GM12878 (cell line): ENCODE measurements at regions of chr2 and their contacts with region 1.

Region 1: DNA sequence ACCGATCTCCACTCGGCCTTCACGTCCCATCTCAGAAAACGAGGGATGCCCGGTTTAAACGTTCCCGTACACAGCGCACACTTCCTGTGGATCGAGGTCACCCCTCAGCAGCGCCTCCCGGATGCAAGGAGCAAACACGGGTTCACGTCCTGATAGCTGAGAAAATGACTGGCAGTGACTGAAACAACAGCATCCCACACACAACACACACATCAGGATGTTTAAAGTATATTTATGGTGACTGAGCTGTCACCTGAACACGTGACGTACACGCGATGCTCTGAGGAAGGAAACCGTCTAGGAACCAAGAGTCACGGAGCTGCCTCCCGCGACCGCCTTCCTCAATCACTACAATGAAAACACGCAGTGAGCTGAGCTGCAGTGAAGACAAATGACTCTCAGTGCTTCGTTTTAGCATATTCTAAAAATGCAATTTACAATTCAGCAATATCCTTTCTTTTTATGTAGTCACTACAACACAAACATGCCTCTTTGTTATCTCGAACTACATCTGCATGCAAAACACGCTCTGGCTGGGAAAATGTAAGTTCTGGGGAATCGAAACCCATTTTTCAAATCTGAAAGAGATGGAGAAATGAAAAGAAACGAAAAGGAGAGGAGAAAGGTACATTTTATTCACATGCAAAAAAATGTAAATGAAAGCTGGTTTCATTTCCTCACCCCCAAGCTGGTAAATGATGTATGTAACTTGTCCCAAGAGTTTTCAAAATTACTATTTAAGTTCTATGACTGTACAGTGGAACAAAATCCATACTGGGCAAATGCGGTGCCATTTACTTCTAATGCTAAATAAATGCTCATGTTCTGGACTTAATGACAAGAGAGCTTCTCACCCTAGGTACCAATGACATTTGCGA is 19.8 kb downstream of the HDAC4 start:
- DNase-seq: peak; percentile 35
- ATAC-seq: peak; percentile 65
- H3K4me3 ChIP-seq: peak overlapping the region; percentile 49; the same call in 1 of the 2 replicates
- H3K27ac ChIP-seq: 0 out of 2 replicates have a peak overlapping the region, but pooled peaks have one; percentile 13
- H3K4me1 ChIP-seq: peaks cover 12% of the 10 kb centered on the region
- H3K27me3 ChIP-seq: no peaks in the 10 kb centered on the region
- CTCF ChIP-seq: no peak
- EP300 ChIP-seq: peak in 1 of 2 experiments; percentile 24; a peak in 1 of 4 replicates
- POLR2A ChIP-seq: no peak
- RAD21 ChIP-seq: no peak

Region 2: DNA sequence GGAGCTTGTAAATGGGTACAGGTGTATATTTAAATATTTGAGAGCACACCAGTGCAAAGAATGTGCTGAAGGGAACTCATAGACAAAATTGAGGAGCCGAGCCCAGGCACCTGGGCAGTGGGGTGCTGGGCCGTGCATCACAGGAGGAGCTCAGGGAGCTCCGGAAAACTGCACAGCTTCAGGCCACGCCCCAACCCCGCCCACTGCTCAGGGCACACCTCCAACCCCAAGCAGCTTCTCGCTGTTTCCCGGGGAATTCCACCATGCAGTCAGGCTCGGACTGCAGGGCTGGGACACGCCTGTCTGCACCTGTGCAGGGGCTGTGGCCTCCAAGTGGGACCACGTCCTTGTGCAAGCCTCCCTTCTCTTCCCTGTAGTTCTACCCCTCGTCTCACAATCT is 223.3 kb before region 1 on chr2:
- CTCF ChIA-PET with region 1: no interaction called
- POLR2A ChIA-PET with region 1: no interaction called
- RAD21 ChIA-PET with region 1: no interaction called
- SMC1A ChIA-PET with region 1: no interaction called
- in situ Hi-C with region 1: no loop called
- intact Hi-C with region 1: no loop called
- DNase-seq: no peak
- ATAC-seq: no peak
- H3K4me3 ChIP-seq: no peak overlapping the region
- H3K27ac ChIP-seq: no peak overlapping the region
- H3K4me1 ChIP-seq: no peaks in the 10 kb centered on the region
- H3K27me3 ChIP-seq: no peaks in the 10 kb centered on the region
- CTCF ChIP-seq: no peak
- EP300 ChIP-seq: no peak
- POLR2A ChIP-seq: no peak
- RAD21 ChIP-seq: no peak

Region 3: GRCh38 chr2:239267288-239267951 is 113.7 kb before region 1 on chr2:
- CTCF ChIA-PET with region 1: interaction called, 6 read pairs
- POLR2A ChIA-PET with region 1: no interaction called
- RAD21 ChIA-PET with region 1: interaction called, 7 read pairs
- SMC1A ChIA-PET with region 1: interaction called, 12 read pairs
- in situ Hi-C with region 1: no loop called
- intact Hi-C with region 1: loop called (anchors 5 kb)
- DNase-seq: peak; percentile 65
- ATAC-seq: peak; percentile 95
- H3K4me3 ChIP-seq: peak overlapping the region; percentile 45; the same call in 1 of the 2 replicates
- H3K27ac ChIP-seq: no peak overlapping the region
- H3K4me1 ChIP-seq: peaks cover 44% of the 10 kb centered on the region
- H3K27me3 ChIP-seq: no peaks in the 10 kb centered on the region
- CTCF ChIP-seq: peak; percentile 42 to 71 (median 57); a peak in 5 of 6 replicates
- EP300 ChIP-seq: no peak
- POLR2A ChIP-seq: peak; percentile 59; the same call in 1 of the 2 replicates
- RAD21 ChIP-seq: peak; percentile 81

Region 4: DNA sequence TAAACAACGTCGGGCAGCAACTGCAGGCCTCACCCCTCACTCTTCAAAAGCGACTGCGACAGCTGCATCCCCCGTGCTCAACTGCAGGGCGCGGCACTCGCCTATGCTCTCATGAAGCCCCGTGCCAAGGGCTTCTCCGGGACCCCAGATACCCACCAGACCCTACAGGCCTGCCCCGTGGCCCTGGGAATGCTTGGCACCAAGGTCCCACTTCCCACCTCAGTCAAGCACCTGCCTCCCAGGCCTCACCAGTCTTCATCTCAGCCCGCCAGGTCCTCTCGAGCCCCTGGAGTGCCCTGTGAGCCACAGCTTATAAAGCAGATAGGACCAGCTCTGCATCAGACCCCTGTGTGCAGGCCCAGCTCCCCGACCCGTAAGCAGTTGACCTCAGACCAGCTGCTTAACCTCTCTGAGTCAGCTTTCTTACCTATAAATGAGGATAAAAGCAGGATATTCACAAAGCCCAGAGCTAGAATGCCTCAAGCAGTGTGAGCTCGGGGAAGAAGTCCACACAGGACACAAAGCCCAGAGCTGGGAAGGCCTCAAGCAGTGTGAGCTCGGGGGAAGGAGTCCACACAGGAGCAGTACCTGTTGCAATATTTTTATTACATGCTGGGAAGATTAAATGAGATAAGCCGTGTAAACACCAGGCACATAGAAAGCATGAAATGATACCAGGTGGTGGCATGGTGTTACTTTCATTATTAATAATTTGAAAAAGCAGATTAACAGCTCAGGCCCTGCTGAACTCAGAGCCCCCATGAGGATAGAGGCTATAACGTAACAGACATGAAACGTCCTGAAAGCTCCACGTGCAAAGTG is 77.1 kb before region 1 on chr2:
- CTCF ChIA-PET with region 1: interaction called, 4 read pairs
- POLR2A ChIA-PET with region 1: interaction called, 3 read pairs
- RAD21 ChIA-PET with region 1: interaction called, 13 read pairs
- SMC1A ChIA-PET with region 1: interaction called, 14 read pairs
- in situ Hi-C with region 1: no loop called
- intact Hi-C with region 1: no loop called
- DNase-seq: no peak
- ATAC-seq: peak; percentile 89
- H3K4me3 ChIP-seq: no peak overlapping the region
- H3K27ac ChIP-seq: no peak overlapping the region
- H3K4me1 ChIP-seq: peaks cover 22% of the 10 kb centered on the region
- H3K27me3 ChIP-seq: no peaks in the 10 kb centered on the region
- CTCF ChIP-seq: no peak
- EP300 ChIP-seq: peak; percentile 66 to 87; a peak in 2 of 4 replicates
- POLR2A ChIP-seq: no peak
- RAD21 ChIP-seq: no peak

Region 5: GRCh38 chr2:239369631-239370161 is 11.4 kb before region 1 on chr2:
- CTCF ChIA-PET with region 1: interaction called, 25 read pairs
- POLR2A ChIA-PET with region 1: interaction called, 13 read pairs
- RAD21 ChIA-PET with region 1: interaction called, 23 read pairs
- SMC1A ChIA-PET with region 1: interaction called, 27 read pairs
- in situ Hi-C with region 1: no loop called
- intact Hi-C with region 1: loop called (anchors 1 kb)
- DNase-seq: peak; percentile 83
- ATAC-seq: peak; percentile 96
- H3K4me3 ChIP-seq: peak overlapping the region; percentile 34; the same call in 1 of the 2 replicates
- H3K27ac ChIP-seq: peak overlapping the region; percentile 9; the same call in 1 of the 2 replicates
- H3K4me1 ChIP-seq: peaks cover 14% of the 10 kb centered on the region
- H3K27me3 ChIP-seq: no peaks in the 10 kb centered on the region
- CTCF ChIP-seq: no peak
- EP300 ChIP-seq: peak in 1 of 2 experiments; percentile 21; a peak in 2 of 4 replicates
- POLR2A ChIP-seq: no peak
- RAD21 ChIP-seq: no peak

Region 6: GRCh38 chr2:239569401-239570090 is 188.5 kb after region 1 on chr2:
- CTCF ChIA-PET with region 1: no interaction called
- POLR2A ChIA-PET with region 1: no interaction called
- RAD21 ChIA-PET with region 1: no interaction called
- SMC1A ChIA-PET with region 1: no interaction called
- in situ Hi-C with region 1: no loop called
- intact Hi-C with region 1: no loop called
- DNase-seq: no peak
- ATAC-seq: no peak
- H3K4me3 ChIP-seq: no peak overlapping the region
- H3K27ac ChIP-seq: no peak overlapping the region
- H3K4me1 ChIP-seq: no peaks in the 10 kb centered on the region
- H3K27me3 ChIP-seq: peaks cover 0 to 2% of the 10 kb centered on the region in 2 experiments; a peak in 2 of 4 replicates
- CTCF ChIP-seq: no peak
- EP300 ChIP-seq: no peak
- POLR2A ChIP-seq: no peak
- RAD21 ChIP-seq: no peak